Caco-2 (cell line): ENCODE measurements at regions of chr9 and their contacts with region 1.

Region 1: DNA sequence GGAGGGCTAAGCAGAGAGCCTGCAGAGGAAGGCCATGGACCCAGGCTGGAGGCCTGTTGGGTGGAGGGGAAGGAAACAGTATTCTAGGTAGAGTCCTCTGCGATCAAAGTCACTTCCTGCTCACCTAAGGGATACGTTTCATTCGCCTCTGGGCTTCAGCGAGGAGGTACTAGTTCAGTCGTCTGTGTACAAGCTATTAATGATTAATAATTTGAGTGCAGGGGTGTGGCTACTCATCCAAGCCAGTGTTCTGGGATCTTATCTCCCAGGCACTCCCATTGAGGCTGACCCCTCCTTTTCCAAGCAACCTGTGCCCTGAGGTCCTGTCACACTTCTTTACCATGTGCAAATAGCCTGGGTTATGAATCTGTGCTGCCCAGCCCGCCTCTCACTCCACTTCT is 25.2 kb downstream of the RALGPS1 start:
- DNase-seq: peak; percentile 89 to 94
- H3K4me3 ChIP-seq: peak overlapping the region; percentile 30; the same call in 1 of the 2 replicates
- H3K4me3 Mint-ChIP-seq: peak overlapping the region; percentile 71
- H3K27ac Mint-ChIP-seq: peak overlapping the region; percentile 54
- H3K4me1 ChIP-seq: peaks cover 10% of the 10 kb centered on the region
- H3K4me1 Mint-ChIP-seq: peaks cover 17% of the 10 kb centered on the region
- H3K27me3 ChIP-seq: no peaks in the 10 kb centered on the region
- H3K27me3 Mint-ChIP-seq: no peaks in the 10 kb centered on the region
- CTCF ChIP-seq: no peak

Region 2: DNA sequence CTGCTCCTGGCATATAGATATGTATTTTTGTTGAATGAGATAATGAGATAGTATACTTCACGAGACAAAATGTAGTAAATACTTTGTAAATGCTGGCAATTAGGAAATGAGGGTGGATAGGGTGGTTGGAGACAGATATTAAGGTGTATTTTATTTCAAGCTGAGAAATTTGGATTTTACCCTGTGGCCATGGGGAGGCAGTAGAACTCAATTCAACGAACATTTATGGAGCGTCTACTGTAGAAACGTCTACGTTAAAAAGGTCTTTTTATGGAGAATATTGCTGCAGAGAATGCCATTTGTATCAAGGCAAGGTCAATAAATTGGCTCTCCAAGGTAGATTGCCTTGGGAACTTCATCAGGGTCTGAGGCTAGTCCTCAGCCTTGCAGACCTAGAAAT is 46.7 kb before region 1 on chr9:
- CTCF ChIA-PET with region 1: interaction called, 3 read pairs
- POLR2A ChIA-PET with region 1: no interaction called
- intact Hi-C with region 1: loop called (anchors 1 kb)
- DNase-seq: peak in 1 of 2 experiments; percentile 28
- H3K4me3 ChIP-seq: no peak overlapping the region
- H3K4me3 Mint-ChIP-seq: no peak overlapping the region
- H3K27ac Mint-ChIP-seq: no peak overlapping the region
- H3K4me1 ChIP-seq: no peaks in the 10 kb centered on the region
- H3K4me1 Mint-ChIP-seq: no peaks in the 10 kb centered on the region
- H3K27me3 ChIP-seq: no peaks in the 10 kb centered on the region
- H3K27me3 Mint-ChIP-seq: no peaks in the 10 kb centered on the region
- CTCF ChIP-seq: peak; percentile 33 to 44

Region 3: GRCh38 chr9:126906091-126906490 is 33.7 kb before region 1 on chr9:
- CTCF ChIA-PET with region 1: no interaction called
- POLR2A ChIA-PET with region 1: no interaction called
- intact Hi-C with region 1: no loop called
- DNase-seq: no peak
- H3K4me3 ChIP-seq: no peak overlapping the region
- H3K4me3 Mint-ChIP-seq: no peak overlapping the region
- H3K27ac Mint-ChIP-seq: no peak overlapping the region
- H3K4me1 ChIP-seq: no peaks in the 10 kb centered on the region
- H3K4me1 Mint-ChIP-seq: no peaks in the 10 kb centered on the region
- H3K27me3 ChIP-seq: no peaks in the 10 kb centered on the region
- H3K27me3 Mint-ChIP-seq: no peaks in the 10 kb centered on the region
- CTCF ChIP-seq: no peak

Region 4: GRCh38 chr9:126957687-126958053 is 17.8 kb after region 1 on chr9:
- CTCF ChIA-PET with region 1: interaction called, 6 read pairs
- POLR2A ChIA-PET with region 1: no interaction called
- intact Hi-C with region 1: loop called (anchors 2 kb)
- DNase-seq: no peak
- H3K4me3 ChIP-seq: no peak overlapping the region
- H3K4me3 Mint-ChIP-seq: no peak overlapping the region
- H3K27ac Mint-ChIP-seq: no peak overlapping the region
- H3K4me1 ChIP-seq: peaks cover 27% of the 10 kb centered on the region
- H3K4me1 Mint-ChIP-seq: peaks cover 30% of the 10 kb centered on the region
- H3K27me3 ChIP-seq: no peaks in the 10 kb centered on the region
- H3K27me3 Mint-ChIP-seq: no peaks in the 10 kb centered on the region
- CTCF ChIP-seq: no peak

Region 5: GRCh38 chr9:127159325-127159801 is 219.5 kb after region 1 on chr9:
- CTCF ChIA-PET with region 1: interaction called, 17 read pairs
- POLR2A ChIA-PET with region 1: no interaction called
- intact Hi-C with region 1: loop called (anchors 1 kb)
- DNase-seq: peak; percentile 81 to 90
- H3K4me3 ChIP-seq: no peak overlapping the region
- H3K4me3 Mint-ChIP-seq: peak overlapping the region; percentile 36
- H3K27ac Mint-ChIP-seq: peak overlapping the region; percentile 81
- H3K4me1 ChIP-seq: peaks cover 15% of the 10 kb centered on the region
- H3K4me1 Mint-ChIP-seq: peaks cover 16% of the 10 kb centered on the region
- H3K27me3 ChIP-seq: no peaks in the 10 kb centered on the region
- H3K27me3 Mint-ChIP-seq: no peaks in the 10 kb centered on the region
- CTCF ChIP-seq: peak; percentile 37 to 79

Region 6: GRCh38 chr9:127224178-127224882 is 284.5 kb after region 1 on chr9:
- CTCF ChIA-PET with region 1: interaction called, 18 read pairs
- POLR2A ChIA-PET with region 1: no interaction called
- intact Hi-C with region 1: no loop called
- DNase-seq: peak; percentile 96 to 97
- H3K4me3 ChIP-seq: peak overlapping the region; percentile 95
- H3K4me3 Mint-ChIP-seq: peak overlapping the region; percentile 92
- H3K27ac Mint-ChIP-seq: peak overlapping the region; percentile 92
- H3K4me1 ChIP-seq: peaks cover 6% of the 10 kb centered on the region
- H3K4me1 Mint-ChIP-seq: peaks cover 18% of the 10 kb centered on the region
- H3K27me3 ChIP-seq: no peaks in the 10 kb centered on the region
- H3K27me3 Mint-ChIP-seq: peaks cover 3% of the 10 kb centered on the region
- CTCF ChIP-seq: no peak